Activated CD4-positive, alpha-beta T cell treated with anti-CD3 and anti-CD28 coated beads, Interleukin-2, amount 10 ng/mL, durations not matched to agents 24 days and 14 days (primary cell): ENCODE measurements at regions of chr9 and their contacts with region 1.

Region 1: GRCh38 chr9:136482793-136483588 is at the start of gene SEC16A:
- DNase-seq: peak; percentile 99
- H3K4me3 Mint-ChIP-seq: peak within 1 kb of the TSS; percentile 94
- H3K27ac Mint-ChIP-seq: peak within 1 kb of the TSS; percentile 97
- H3K4me1 Mint-ChIP-seq: peaks cover 20% of the 10 kb centered on the region
- H3K27me3 Mint-ChIP-seq: peaks cover 2% of the 10 kb centered on the region
- total RNA-seq, gene SEC16A: 79.2 and 81.2 TPM in 2 replicates

Region 2: DNA sequence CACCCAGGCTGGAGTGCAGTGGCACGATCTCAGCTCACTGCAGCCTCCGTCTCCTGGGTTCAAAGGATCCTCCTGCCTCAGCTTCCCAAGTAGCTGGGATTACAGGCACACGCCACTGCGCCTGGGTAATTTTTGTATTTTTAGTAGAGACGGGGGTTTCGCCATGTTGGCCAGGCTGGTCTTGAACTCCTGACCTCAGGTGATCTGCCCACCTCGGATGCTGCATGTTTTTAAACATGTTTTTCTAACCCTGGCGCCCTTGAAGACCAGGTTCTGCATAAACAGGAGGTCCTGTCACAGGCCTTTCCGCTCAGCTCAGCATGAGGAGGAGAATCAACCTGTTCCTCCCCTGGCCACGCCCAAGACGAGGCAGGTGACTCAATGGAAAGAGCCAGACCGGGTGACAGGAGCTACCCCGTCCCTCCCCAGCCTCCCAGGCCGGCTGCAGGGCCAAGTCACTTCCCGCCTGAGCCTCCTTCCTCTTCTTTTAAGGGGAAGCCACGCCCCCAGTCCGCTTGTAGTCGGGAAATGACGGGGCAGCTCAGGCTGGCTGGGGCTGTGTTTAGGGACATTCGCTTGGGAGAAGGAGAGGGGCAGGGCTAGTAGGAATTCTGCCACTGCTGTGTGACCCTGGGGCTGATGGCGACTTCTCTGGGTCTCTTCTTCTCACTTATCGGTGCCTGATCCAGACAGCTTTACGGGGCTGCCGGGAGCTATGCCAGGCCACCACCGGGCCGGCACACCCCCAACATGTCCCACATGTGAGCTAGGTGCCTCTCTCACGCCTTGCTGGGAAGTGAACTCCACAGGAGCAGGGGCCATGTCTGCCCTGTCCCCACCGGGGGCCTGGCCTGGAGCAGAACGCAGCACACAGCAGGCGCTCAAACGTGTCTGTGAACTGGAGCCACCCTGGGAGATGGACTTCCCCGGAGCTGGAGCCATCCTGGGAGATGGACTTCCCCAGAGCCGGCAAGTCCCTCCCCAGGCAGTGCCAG is 56.7 kb after region 1 on chr9:
- intact Hi-C with region 1: loop called (anchors 1 kb)
- DNase-seq: peak; percentile 97
- H3K4me3 Mint-ChIP-seq: peak overlapping the region; percentile 81
- H3K27ac Mint-ChIP-seq: peak overlapping the region; percentile 100
- H3K4me1 Mint-ChIP-seq: peaks cover 43% of the 10 kb centered on the region
- H3K27me3 Mint-ChIP-seq: no peaks in the 10 kb centered on the region

Region 3: DNA sequence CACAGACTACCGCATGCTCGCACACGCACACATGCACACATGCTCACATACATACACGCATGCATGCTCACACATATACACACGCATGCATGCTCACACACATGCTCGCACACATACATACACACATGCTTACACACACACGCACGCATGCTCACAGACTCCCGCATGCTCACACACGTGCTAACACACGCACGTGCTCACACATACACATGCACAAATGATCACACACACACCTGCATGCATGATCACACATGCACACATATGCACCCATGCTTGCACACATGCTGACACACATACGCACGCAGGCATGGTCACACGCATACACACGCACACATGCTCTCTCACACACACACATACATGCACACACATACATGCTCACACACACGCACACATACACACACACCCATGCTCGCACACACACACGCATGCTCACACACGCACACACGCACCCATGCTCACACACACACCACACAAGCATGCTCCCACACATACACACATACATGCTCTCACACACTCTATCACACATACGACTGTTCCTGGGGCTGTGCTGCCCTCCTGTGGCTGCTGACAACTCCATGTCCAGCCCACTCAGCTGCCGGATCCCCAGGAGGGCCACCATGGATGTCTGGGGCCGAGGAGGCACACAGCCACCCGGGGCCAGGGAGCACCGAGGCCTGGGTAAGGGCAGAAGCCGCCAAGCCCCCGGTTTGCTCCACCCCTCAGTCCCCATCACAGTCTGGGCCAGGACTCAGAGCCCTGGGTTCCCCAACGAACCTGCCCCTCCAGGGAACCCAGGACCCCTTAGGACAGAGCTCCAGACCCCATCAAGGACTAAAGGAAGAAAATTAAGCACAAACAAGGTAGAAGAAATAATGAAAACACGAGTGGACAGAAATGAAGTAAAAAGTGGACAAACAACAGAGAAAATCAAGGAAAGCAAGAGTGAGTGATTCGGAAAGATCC is 148.3 kb after region 1 on chr9:
- intact Hi-C with region 1: loop called (anchors 1 kb)
- DNase-seq: peak; percentile 93
- H3K4me3 Mint-ChIP-seq: no peak overlapping the region
- H3K27ac Mint-ChIP-seq: no peak overlapping the region
- H3K4me1 Mint-ChIP-seq: peaks cover 2% of the 10 kb centered on the region
- H3K27me3 Mint-ChIP-seq: peaks cover 6% of the 10 kb centered on the region

Region 4: GRCh38 chr9:137453643-137454081 is 970.7 kb after region 1 on chr9:
- intact Hi-C with region 1: loop called (anchors 5 kb)
- DNase-seq: peak; percentile 90
- H3K4me3 Mint-ChIP-seq: peak overlapping the region; percentile 61
- H3K27ac Mint-ChIP-seq: no peak overlapping the region
- H3K4me1 Mint-ChIP-seq: peaks cover 25% of the 10 kb centered on the region
- H3K27me3 Mint-ChIP-seq: no peaks in the 10 kb centered on the region